Activated CD4-positive, alpha-beta memory T cell treated with anti-CD3 and anti-CD28 coated beads for 36 hours (primary cell): ENCODE measurements at regions of chr5 and their contacts with region 1.

Region 1: DNA sequence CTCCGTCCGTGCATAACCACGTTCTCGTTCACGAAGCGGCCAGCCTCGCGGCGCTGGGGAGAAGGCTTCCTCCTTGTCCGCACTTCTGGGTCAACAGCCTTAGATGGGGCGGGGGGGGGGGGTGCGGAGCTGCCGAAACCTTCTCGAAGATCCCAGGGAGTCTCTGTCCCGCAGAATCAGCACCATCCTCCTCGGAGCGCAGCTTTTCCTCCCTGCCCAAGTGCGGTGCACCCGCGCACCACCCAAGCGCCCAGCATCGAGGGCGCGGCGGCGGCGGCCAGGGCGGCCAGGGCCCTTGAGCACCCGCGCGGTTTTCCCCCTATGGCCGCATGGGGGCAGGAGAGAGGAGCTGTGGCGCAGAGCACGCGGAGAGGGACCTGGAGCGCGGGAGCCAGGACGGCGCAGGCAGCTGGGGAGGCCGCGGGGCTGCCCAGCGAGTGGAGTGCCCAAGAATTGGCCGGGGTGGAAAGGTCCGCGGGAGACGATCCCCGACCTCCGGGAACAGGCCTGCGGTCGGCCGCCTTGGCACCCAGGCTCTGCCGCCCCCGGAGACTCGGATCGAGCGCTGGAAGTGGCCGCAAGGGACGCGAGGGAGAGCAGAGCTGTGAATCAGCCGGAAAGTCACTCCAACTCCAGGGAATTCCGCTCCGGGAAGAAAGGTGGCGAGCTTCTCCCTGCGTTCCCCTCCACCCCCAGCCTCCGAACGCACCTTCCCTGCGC is 43.1 kb downstream of the TMEM174 start:
- DNase-seq: peak; percentile 76
- H3K4me3 Mint-ChIP-seq: no peak overlapping the region
- H3K27ac Mint-ChIP-seq: no peak overlapping the region
- H3K4me1 Mint-ChIP-seq: peaks cover 16% of the 10 kb centered on the region
- H3K27me3 Mint-ChIP-seq: peaks cover 69% of the 10 kb centered on the region

Region 2: GRCh38 chr5:72955768-72956323 is 260.2 kb before region 1 on chr5 and contains the start of gene FCHO2:
- CTCF ChIA-PET with region 1: interaction called, 3 read pairs
- POLR2A ChIA-PET with region 1: no interaction called
- intact Hi-C with region 1: loop called (anchors 5 kb)
- DNase-seq: peak; percentile 95
- H3K4me3 Mint-ChIP-seq: peak within 1 kb of the TSS; percentile 87
- H3K27ac Mint-ChIP-seq: peak within 1 kb of the TSS; percentile 49
- H3K4me1 Mint-ChIP-seq: peaks cover 14% of the 10 kb centered on the region
- H3K27me3 Mint-ChIP-seq: peaks cover 43% of the 10 kb centered on the region
- total RNA-seq, gene FCHO2: 1.3 TPM

Region 3: GRCh38 chr5:73093943-73094342 is 122.1 kb before region 1 on chr5:
- CTCF ChIA-PET with region 1: no interaction called
- POLR2A ChIA-PET with region 1: no interaction called
- intact Hi-C with region 1: no loop called
- DNase-seq: peak; percentile 27
- H3K4me3 Mint-ChIP-seq: no peak overlapping the region
- H3K27ac Mint-ChIP-seq: no peak overlapping the region
- H3K4me1 Mint-ChIP-seq: peaks cover 11% of the 10 kb centered on the region
- H3K27me3 Mint-ChIP-seq: peaks cover 15% of the 10 kb centered on the region

Region 4: DNA sequence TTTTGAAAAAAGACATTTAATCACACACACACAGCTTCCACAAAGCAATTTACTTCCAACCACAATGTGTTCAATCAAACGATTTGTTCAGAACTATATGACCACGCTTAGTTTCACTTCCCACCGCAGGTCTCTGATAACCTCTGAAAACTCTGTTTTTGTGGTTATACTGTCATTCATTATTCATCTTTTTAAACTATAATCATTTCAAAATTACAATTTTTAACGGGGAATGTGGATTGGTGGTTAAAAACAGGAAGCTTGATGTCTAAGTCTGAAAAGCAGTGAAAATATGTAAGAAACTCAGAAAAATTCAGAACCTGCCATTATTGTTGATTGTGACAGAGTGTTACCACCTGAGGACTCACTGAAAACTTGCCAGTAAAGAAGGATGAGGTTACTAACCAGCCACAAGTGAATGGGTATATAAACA is 55.8 kb before region 1 on chr5:
- CTCF ChIA-PET with region 1: interaction called, 4 read pairs
- POLR2A ChIA-PET with region 1: no interaction called
- intact Hi-C with region 1: loop called (anchors 1 kb)
- DNase-seq: peak; percentile 79
- H3K4me3 Mint-ChIP-seq: peak overlapping the region; percentile 12
- H3K27ac Mint-ChIP-seq: peak overlapping the region; percentile 4
- H3K4me1 Mint-ChIP-seq: peaks cover 28% of the 10 kb centered on the region
- H3K27me3 Mint-ChIP-seq: peaks cover 67% of the 10 kb centered on the region

Region 5: GRCh38 chr5:73201547-73202513 is 14.2 kb before region 1 on chr5:
- CTCF ChIA-PET with region 1: interaction called, 25 read pairs
- POLR2A ChIA-PET with region 1: no interaction called
- intact Hi-C with region 1: no loop called
- DNase-seq: peak; percentile 81
- H3K4me3 Mint-ChIP-seq: no peak overlapping the region
- H3K27ac Mint-ChIP-seq: no peak overlapping the region
- H3K4me1 Mint-ChIP-seq: peaks cover 3% of the 10 kb centered on the region
- H3K27me3 Mint-ChIP-seq: peaks cover 59% of the 10 kb centered on the region

Region 6: DNA sequence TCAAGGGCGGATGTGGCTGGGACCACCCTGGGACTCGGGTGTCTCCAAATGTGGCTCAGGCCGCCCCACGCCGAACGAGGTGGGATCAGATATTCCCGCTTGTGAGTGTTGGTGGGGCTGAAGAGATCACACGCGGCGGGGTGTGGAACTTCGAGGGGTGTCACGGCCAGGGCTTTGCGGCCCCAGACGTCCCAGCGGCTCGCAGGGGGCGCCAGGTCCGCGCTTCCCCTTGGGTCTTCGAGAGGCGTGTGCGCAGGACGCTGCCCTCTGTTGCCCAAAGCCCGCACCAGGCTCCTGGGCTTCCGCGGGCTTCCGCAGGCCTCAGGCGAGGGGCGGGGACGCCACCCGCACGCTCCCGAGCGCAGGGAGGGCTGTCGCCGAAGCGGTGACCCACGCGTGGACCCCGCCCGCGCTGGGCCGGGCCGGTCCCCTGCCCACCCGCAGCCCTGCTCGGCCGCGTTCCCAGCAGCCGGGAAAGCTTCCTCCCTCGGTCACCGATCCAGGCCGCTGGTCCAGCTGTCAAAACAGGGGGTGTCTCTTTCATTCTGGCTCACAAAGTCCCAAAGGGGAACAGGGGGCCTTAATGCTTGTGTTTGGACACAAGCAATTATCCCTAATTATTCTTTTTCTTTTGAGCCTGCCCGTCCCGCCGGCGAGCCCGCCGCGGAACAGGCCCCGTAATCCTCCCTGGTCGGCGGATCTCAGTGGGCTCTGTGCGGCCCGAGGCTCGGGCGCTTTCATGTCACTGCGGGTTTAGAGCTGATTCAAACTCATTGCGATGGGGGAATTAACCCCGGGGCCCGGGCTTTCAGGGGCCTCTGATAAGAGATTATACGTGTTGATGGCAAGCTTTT is 17.5 kb after region 1 on chr5:
- CTCF ChIA-PET with region 1: interaction called, 12 read pairs
- POLR2A ChIA-PET with region 1: no interaction called
- intact Hi-C with region 1: no loop called
- DNase-seq: no peak
- H3K4me3 Mint-ChIP-seq: no peak overlapping the region
- H3K27ac Mint-ChIP-seq: no peak overlapping the region
- H3K4me1 Mint-ChIP-seq: peaks cover 23% of the 10 kb centered on the region
- H3K27me3 Mint-ChIP-seq: peaks cover 59% of the 10 kb centered on the region

Region 7: GRCh38 chr5:73298772-73299630 is 83.0 kb after region 1 on chr5:
- CTCF ChIA-PET with region 1: interaction called, 10 read pairs
- POLR2A ChIA-PET with region 1: no interaction called
- intact Hi-C with region 1: loop called (anchors 5 kb)
- DNase-seq: peak; percentile 13
- H3K4me3 Mint-ChIP-seq: no peak overlapping the region
- H3K27ac Mint-ChIP-seq: no peak overlapping the region
- H3K4me1 Mint-ChIP-seq: peaks cover 18% of the 10 kb centered on the region
- H3K27me3 Mint-ChIP-seq: peaks cover 82% of the 10 kb centered on the region

Region 8: GRCh38 chr5:73454351-73455036 is 238.4 kb after region 1 on chr5:
- CTCF ChIA-PET with region 1: interaction called, 22 read pairs
- POLR2A ChIA-PET with region 1: no interaction called
- intact Hi-C with region 1: loop called (anchors 2 kb)
- DNase-seq: peak; percentile 43
- H3K4me3 Mint-ChIP-seq: no peak overlapping the region
- H3K27ac Mint-ChIP-seq: no peak overlapping the region
- H3K4me1 Mint-ChIP-seq: peaks cover 7% of the 10 kb centered on the region
- H3K27me3 Mint-ChIP-seq: peaks cover 63% of the 10 kb centered on the region